ENCODE measurements at regions of chr6 and their contacts with region 1.

Region 1: GRCh38 chr6:150417899-150418826 is 49.4 kb downstream of the IYD start:
- DNase-seq: peak; percentile 26
- H3K4me3 Mint-ChIP-seq: peak overlapping the region; percentile 72
- H3K27ac Mint-ChIP-seq: peak overlapping the region; percentile 80
- H3K4me1 Mint-ChIP-seq: peaks cover 47% of the 10 kb centered on the region
- H3K27me3 Mint-ChIP-seq: peaks cover 33% of the 10 kb centered on the region

Region 2: GRCh38 chr6:150057501-150057951 is 360.6 kb before region 1 on chr6:
- intact Hi-C with region 1: no loop called
- DNase-seq: no peak
- H3K4me3 Mint-ChIP-seq: no peak overlapping the region
- H3K27ac Mint-ChIP-seq: no peak overlapping the region
- H3K4me1 Mint-ChIP-seq: peaks cover 8% of the 10 kb centered on the region
- H3K27me3 Mint-ChIP-seq: peaks cover 45% of the 10 kb centered on the region

Region 3: DNA sequence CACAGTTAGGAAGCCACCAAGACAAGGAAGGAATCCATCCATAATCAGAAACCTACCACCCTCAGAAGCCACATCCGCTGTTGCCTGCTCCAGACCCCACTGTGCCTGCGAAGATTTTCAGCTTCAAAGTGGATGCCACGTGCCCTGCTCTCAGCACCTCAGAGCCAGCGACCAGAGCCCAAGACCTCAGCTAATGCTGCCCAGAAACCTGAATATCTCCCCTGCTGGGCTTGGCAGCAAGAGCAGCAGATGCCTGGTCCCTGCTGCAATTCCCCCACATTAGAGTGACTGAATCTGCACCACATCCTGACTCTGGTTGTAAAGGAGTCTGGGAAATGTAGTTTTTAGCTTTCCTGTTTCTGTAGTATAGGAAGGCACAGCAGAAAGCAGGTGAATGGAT is 338.6 kb before region 1 on chr6:
- intact Hi-C with region 1: loop called (anchors 5 kb)
- DNase-seq: no peak
- H3K4me3 Mint-ChIP-seq: no peak overlapping the region
- H3K27ac Mint-ChIP-seq: no peak overlapping the region
- H3K4me1 Mint-ChIP-seq: peaks cover 21% of the 10 kb centered on the region
- H3K27me3 Mint-ChIP-seq: peaks cover 35% of the 10 kb centered on the region

Region 4: GRCh38 chr6:150256618-150257272 is 161.4 kb before region 1 on chr6:
- intact Hi-C with region 1: loop called (anchors 5 kb)
- DNase-seq: no peak
- H3K4me3 Mint-ChIP-seq: no peak overlapping the region
- H3K27ac Mint-ChIP-seq: no peak overlapping the region
- H3K4me1 Mint-ChIP-seq: peaks cover 48% of the 10 kb centered on the region
- H3K27me3 Mint-ChIP-seq: peaks cover 2% of the 10 kb centered on the region

Region 5: DNA sequence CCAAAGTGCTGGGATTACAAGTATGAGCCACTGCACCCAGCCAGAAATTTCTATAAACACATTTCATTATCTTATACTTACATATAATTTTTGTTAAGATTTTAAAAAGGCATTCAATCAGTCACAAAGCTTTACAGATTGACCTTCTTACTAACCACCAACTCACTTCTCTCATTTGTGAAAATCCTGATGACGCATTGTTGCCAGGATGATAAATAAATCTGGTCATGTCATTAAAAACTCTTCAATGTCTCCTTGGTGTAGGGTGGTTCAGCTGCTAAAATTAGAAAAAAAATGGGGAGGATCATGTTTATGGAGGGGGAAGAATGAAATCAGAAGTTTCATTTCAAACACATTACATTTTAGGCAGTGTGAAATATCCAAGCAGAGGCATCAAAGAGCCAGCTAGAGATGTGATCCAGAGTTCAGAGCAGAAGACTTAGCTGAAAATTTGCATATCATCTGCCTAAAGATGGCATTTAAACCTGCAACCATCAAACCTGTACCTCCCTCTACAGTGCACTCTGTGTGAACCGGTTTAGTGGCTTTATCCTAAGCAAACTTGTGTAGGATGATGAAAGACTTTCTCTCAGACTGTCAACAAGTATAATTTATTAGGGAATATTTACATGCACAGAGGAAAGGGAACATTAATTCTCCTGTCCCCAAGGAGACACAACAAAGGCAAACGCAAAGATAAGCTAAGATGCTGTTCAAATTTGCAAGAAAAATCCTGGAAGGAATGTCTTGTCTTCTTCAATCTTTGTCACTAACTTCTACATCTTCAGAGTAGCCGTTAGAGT is 96.6 kb after region 1 on chr6:
- intact Hi-C with region 1: no loop called
- DNase-seq: no peak
- H3K4me3 Mint-ChIP-seq: no peak overlapping the region
- H3K27ac Mint-ChIP-seq: no peak overlapping the region
- H3K4me1 Mint-ChIP-seq: no peaks in the 10 kb centered on the region
- H3K27me3 Mint-ChIP-seq: peaks cover 2% of the 10 kb centered on the region

Region 6: GRCh38 chr6:150600301-150601017 is 182.3 kb after region 1 on chr6:
- intact Hi-C with region 1: loop called (anchors 5 kb)
- DNase-seq: peak; percentile 26
- H3K4me3 Mint-ChIP-seq: peak overlapping the region; percentile 80
- H3K27ac Mint-ChIP-seq: peak overlapping the region; percentile 64
- H3K4me1 Mint-ChIP-seq: peaks cover 14% of the 10 kb centered on the region
- H3K27me3 Mint-ChIP-seq: peaks cover 74% of the 10 kb centered on the region

Region 7: GRCh38 chr6:150987371-150987828 is 569.2 kb after region 1 on chr6:
- intact Hi-C with region 1: loop called (anchors 5 kb)
- DNase-seq: peak; percentile 29
- H3K4me3 Mint-ChIP-seq: peak overlapping the region; percentile 49
- H3K27ac Mint-ChIP-seq: peak overlapping the region; percentile 95
- H3K4me1 Mint-ChIP-seq: peaks cover 9% of the 10 kb centered on the region
- H3K27me3 Mint-ChIP-seq: no peaks in the 10 kb centered on the region

Measured in activated T-helper 2 cell treated with anti-CD3 and anti-CD28 coated beads, Interferon-gamma antibody, Interleukin-2, Interleukin-4, amounts not matched to agents 10 μg/mL and 5 μg/mL and 100 μg/mL, durations not matched to agents 14 hours and 24 hours and 36 hours (primary cell).